ENCODE measurements at regions of chr13 and their contacts with region 1.

Region 1: DNA sequence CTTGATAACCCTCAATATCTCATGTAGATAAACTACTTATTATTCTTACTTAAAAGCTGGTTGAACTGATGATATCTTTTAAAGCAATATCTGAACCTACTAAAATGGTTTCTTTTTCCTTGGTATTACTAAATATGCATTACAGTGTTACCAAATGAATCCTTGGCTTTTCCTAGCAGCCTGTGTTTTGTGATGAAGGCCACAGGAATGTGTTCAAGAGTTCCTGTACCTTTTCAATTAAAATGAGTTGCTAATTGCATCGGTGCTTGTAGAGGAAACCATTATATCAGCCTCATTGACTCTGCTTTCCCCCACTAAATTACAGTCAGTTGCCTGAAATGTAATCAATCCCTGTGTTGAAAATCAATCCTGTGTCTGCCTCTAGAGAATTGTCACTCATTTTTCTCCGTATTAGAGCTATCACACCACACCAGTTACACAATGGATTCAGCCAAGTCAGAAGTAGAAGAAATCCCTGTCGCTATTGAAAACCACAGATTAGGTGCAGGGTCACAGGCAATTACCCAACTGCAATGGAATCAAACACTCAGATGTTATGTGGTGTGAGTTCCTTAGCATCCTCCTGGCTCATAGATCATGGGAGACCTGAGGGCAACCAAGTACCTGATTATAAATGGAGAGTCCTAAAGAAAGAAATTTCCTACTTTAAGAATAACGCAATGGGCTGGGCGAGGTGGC is 13.3 kb downstream of the FAM216B start:
- DNase-seq: no peak
- ATAC-seq: no peak
- H3K4me3 Mint-ChIP-seq: no peak overlapping the region
- H3K27ac Mint-ChIP-seq: no peak overlapping the region
- H3K4me1 Mint-ChIP-seq: no peaks in the 10 kb centered on the region
- H3K27me3 Mint-ChIP-seq: peaks cover 15% of the 10 kb centered on the region

Region 2: GRCh38 chr13:42836930-42837690 is 42.4 kb after region 1 on chr13:
- CTCF ChIA-PET with region 1: no interaction called
- POLR2A ChIA-PET with region 1: no interaction called
- intact Hi-C with region 1: loop called in 1 of 2 experiments (anchors 5 kb)
- DNase-seq: no peak
- ATAC-seq: no peak
- H3K4me3 Mint-ChIP-seq: no peak overlapping the region
- H3K27ac Mint-ChIP-seq: no peak overlapping the region
- H3K4me1 Mint-ChIP-seq: peaks cover 11% of the 10 kb centered on the region
- H3K27me3 Mint-ChIP-seq: peaks cover 6% of the 10 kb centered on the region

Measured in activated CD4-positive, alpha-beta T cell treated with anti-CD3 and anti-CD28 coated beads for 36 hours (primary cell).